ENCODE measurements at regions of chr12 and their contacts with region 1.

Region 1: DNA sequence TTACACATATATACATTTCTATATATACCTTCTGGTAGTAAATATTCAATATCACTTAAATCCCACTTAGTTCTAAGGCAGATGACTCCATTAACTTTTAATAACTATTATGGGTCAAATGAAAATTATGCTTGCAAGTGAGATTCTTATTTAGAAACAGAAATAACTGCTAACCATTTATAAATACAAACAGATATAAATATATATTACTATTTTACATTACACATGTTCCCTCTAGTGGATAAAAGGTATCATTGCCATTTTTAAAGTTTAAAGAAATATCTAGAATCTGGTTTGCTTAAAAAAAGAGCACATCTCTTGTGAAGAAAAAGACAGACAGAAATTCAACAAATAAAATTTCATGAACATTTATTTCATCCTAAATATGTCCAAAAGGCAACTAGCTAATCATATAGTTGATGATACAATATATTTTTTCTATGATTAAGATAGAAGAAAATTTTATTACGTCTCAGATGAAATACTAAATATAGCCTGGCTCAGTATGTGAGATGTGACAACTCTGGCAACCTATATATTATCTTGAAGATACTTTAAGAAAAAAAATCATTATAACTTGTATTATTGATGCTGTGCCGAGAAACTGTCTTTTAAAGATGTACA is 11.7 kb upstream of the RAD51AP1 start:
- DNase-seq: peak in 3 of 14 experiments; percentile 26 to 40 (median 33)
- ATAC-seq: peak; percentile 45
- H3K4me3 ChIP-seq: no peak overlapping the region
- H3K4me3 Mint-ChIP-seq: no peak overlapping the region
- H3K27ac ChIP-seq: no peak overlapping the region
- H3K27ac Mint-ChIP-seq: peak overlapping the region; percentile 65
- H3K4me1 ChIP-seq: peaks cover 11% of the 10 kb centered on the region
- H3K4me1 Mint-ChIP-seq: peaks cover 5% of the 10 kb centered on the region
- H3K27me3 ChIP-seq: no peaks in the 10 kb centered on the region
- H3K27me3 Mint-ChIP-seq: no peaks in the 10 kb centered on the region
- CTCF ChIP-seq: peak; percentile 87

Region 2: GRCh38 chr12:4356041-4356327 is 171.1 kb before region 1 on chr12:
- CTCF ChIA-PET with region 1: no interaction called
- POLR2A ChIA-PET with region 1: no interaction called
- intact Hi-C with region 1: loop called (anchors 1 to 2 kb)
- DNase-seq: peak in 13 of 14 experiments; percentile 7 to 57 (median 29)
- ATAC-seq: peak; percentile 32
- H3K4me3 ChIP-seq: no peak overlapping the region
- H3K4me3 Mint-ChIP-seq: no peak overlapping the region
- H3K27ac ChIP-seq: no peak overlapping the region
- H3K27ac Mint-ChIP-seq: no peak overlapping the region
- H3K4me1 ChIP-seq: peaks cover 3% of the 10 kb centered on the region
- H3K4me1 Mint-ChIP-seq: peaks cover 6% of the 10 kb centered on the region
- H3K27me3 ChIP-seq: no peaks in the 10 kb centered on the region
- H3K27me3 Mint-ChIP-seq: no peaks in the 10 kb centered on the region
- CTCF ChIP-seq: peak; percentile 22

Region 3: GRCh38 chr12:4421590-4422031 is 105.4 kb before region 1 on chr12:
- CTCF ChIA-PET with region 1: interaction called, 3 read pairs
- POLR2A ChIA-PET with region 1: interaction called, 4 read pairs
- intact Hi-C with region 1: loop called (anchors 1 kb)
- DNase-seq: peak in 5 of 14 experiments; percentile 5 to 70 (median 49)
- ATAC-seq: no peak
- H3K4me3 ChIP-seq: no peak overlapping the region
- H3K4me3 Mint-ChIP-seq: no peak overlapping the region
- H3K27ac ChIP-seq: no peak overlapping the region
- H3K27ac Mint-ChIP-seq: no peak overlapping the region
- H3K4me1 ChIP-seq: no peaks in the 10 kb centered on the region
- H3K4me1 Mint-ChIP-seq: no peaks in the 10 kb centered on the region
- H3K27me3 ChIP-seq: peaks cover 0 to 3% of the 10 kb centered on the region in 2 experiments
- H3K27me3 Mint-ChIP-seq: peaks cover 8% of the 10 kb centered on the region
- CTCF ChIP-seq: peak; percentile 92

Region 4: GRCh38 chr12:4506870-4507269 is 20.2 kb before region 1 on chr12:
- CTCF ChIA-PET with region 1: interaction called, 3 read pairs
- POLR2A ChIA-PET with region 1: interaction called, 13 read pairs
- intact Hi-C with region 1: loop called in 1 of 2 experiments (anchors 2 kb)
- DNase-seq: peak in 4 of 14 experiments; percentile 19 to 79 (median 74)
- ATAC-seq: peak; percentile 94
- H3K4me3 ChIP-seq: peak overlapping the region; percentile 17
- H3K4me3 Mint-ChIP-seq: peak overlapping the region; percentile 81
- H3K27ac ChIP-seq: peak overlapping the region in 1 of 2 donors; percentile 33
- H3K27ac Mint-ChIP-seq: peak overlapping the region; percentile 84
- H3K4me1 ChIP-seq: no peaks in the 10 kb centered on the region
- H3K4me1 Mint-ChIP-seq: peaks cover 36% of the 10 kb centered on the region
- H3K27me3 ChIP-seq: no peaks in the 10 kb centered on the region
- H3K27me3 Mint-ChIP-seq: no peaks in the 10 kb centered on the region
- CTCF ChIP-seq: no peak

Region 5: GRCh38 chr12:4562034-4562657 is 35.1 kb after region 1 on chr12 and contains the start of gene DYRK4:
- CTCF ChIA-PET with region 1: no interaction called
- POLR2A ChIA-PET with region 1: no interaction called
- intact Hi-C with region 1: no loop called
- DNase-seq: peak in 4 of 14 experiments; percentile 5 to 49 (median 26)
- ATAC-seq: no peak
- H3K4me3 ChIP-seq: peak within 1 kb of the TSS; percentile 30
- H3K4me3 Mint-ChIP-seq: no peak within 1 kb of the TSS
- H3K27ac ChIP-seq: no peak within 1 kb of the TSS
- H3K27ac Mint-ChIP-seq: no peak within 1 kb of the TSS
- H3K4me1 ChIP-seq: peaks cover 5% of the 10 kb centered on the region
- H3K4me1 Mint-ChIP-seq: peaks cover 8% of the 10 kb centered on the region
- H3K27me3 ChIP-seq: peaks cover 0 to 5% of the 10 kb centered on the region in 2 experiments
- H3K27me3 Mint-ChIP-seq: peaks cover 37% of the 10 kb centered on the region
- CTCF ChIP-seq: no peak
- total RNA-seq, gene DYRK4: 5.4 to 7.2 TPM

Region 6: GRCh38 chr12:4943067-4943937 is 416.3 kb after region 1 on chr12:
- CTCF ChIA-PET with region 1: no interaction called
- POLR2A ChIA-PET with region 1: no interaction called
- intact Hi-C with region 1: no loop called
- DNase-seq: no peak
- ATAC-seq: no peak
- H3K4me3 ChIP-seq: no peak overlapping the region
- H3K4me3 Mint-ChIP-seq: no peak overlapping the region
- H3K27ac ChIP-seq: no peak overlapping the region
- H3K27ac Mint-ChIP-seq: no peak overlapping the region
- H3K4me1 ChIP-seq: no peaks in the 10 kb centered on the region
- H3K4me1 Mint-ChIP-seq: no peaks in the 10 kb centered on the region
- H3K27me3 ChIP-seq: peaks cover 3 to 11% of the 10 kb centered on the region in 2 experiments
- H3K27me3 Mint-ChIP-seq: peaks cover 6% of the 10 kb centered on the region
- CTCF ChIP-seq: no peak

Measured in CD4-positive, alpha-beta T cell (primary cell).